ENCODE measurements at regions of chr11 and their contacts with region 1.

Region 1: GRCh38 chr11:64448599-64449556 is 89.9 kb downstream of the RPS6KA4 start:
- DNase-seq: peak; percentile 81 to 87
- ATAC-seq: peak; percentile 88 to 97
- H3K4me3 ChIP-seq: peak overlapping the region; percentile 37
- H3K27ac ChIP-seq: peak overlapping the region; percentile 17 to 72; a peak in 4 of 6 replicates
- H3K4me1 ChIP-seq: peaks cover 10% of the 10 kb centered on the region; the same call in 2 of the 3 replicates
- CTCF ChIP-seq: peak; percentile 84
- EP300 ChIP-seq: no peak
- POLR2A ChIP-seq: no peak
- RAD21 ChIP-seq: peak; percentile 74 to 76; a peak in 4 of 5 replicates

Region 2: DNA sequence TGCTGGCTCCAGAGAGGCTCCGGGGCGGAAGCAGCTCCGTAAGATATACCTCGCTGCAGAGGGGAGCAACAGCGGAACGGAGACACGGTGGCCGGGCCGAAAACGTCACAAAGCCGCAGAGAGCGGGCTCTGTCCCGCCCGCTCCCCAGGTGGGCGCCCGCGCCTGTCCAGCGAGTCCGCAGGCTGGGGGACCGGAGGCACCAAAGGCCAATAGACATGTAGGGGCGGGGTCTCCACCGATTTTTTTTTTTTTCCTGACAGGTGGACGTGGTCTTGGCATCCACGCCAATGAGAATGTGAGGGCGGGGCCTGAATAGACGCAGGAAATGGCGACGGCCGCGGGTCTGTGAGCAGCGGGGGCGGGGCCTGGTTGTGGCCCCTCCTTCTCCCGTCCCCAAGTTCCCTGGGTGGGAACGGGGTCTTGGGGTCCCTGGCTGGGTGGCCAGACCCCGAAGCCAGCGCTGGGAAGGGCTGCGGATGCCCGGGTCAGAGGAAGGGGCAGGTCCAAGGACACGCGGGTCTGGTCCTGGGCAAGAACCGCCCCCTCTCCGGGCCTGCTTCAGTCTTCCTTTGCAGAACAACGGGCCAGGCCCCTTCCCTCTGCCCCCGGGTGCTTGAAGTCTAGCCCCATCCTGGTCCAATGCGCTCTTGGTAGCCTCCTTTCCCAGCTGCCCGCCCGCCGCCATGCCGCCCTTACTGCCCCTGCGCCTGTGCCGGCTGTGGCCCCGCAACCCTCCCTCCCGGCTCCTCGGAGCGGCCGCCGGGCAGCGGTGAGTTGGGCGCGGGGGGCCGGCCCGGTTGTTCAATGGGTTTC is 218.5 kb before region 1 on chr11 and contains the start of gene DNAJC4:
- CTCF ChIA-PET with region 1: no interaction called
- POLR2A ChIA-PET with region 1: no interaction called
- DNase-seq: peak; percentile 77 to 91
- ATAC-seq: peak; percentile 35 to 64
- H3K4me3 ChIP-seq: peak within 1 kb of the TSS; percentile 94
- H3K27ac ChIP-seq: peak within 1 kb of the TSS; percentile 94 to 95
- H3K4me1 ChIP-seq: peaks cover 42% of the 10 kb centered on the region
- CTCF ChIP-seq: no peak
- EP300 ChIP-seq: no peak
- POLR2A ChIP-seq: peak; percentile 36
- RAD21 ChIP-seq: no peak
- polyA plus RNA-seq, gene DNAJC4: 8.9 and 9.8 TPM in 2 replicates

Region 3: GRCh38 chr11:64419818-64420485 is 28.9 kb before region 1 on chr11:
- CTCF ChIA-PET with region 1: interaction called, 23 read pairs
- POLR2A ChIA-PET with region 1: no interaction called
- DNase-seq: peak in 1 of 2 experiments; percentile 34
- ATAC-seq: no peak
- H3K4me3 ChIP-seq: no peak overlapping the region
- H3K27ac ChIP-seq: no peak overlapping the region
- H3K4me1 ChIP-seq: no peaks in the 10 kb centered on the region
- CTCF ChIP-seq: no peak
- EP300 ChIP-seq: no peak
- POLR2A ChIP-seq: no peak
- RAD21 ChIP-seq: no peak

Region 4: GRCh38 chr11:64436000-64436399 is 12.9 kb before region 1 on chr11:
- CTCF ChIA-PET with region 1: interaction called, 45 read pairs
- POLR2A ChIA-PET with region 1: no interaction called
- DNase-seq: no peak
- ATAC-seq: peak in 1 of 2 experiments; percentile 40; a peak in 2 of 6 replicates
- H3K4me3 ChIP-seq: no peak overlapping the region
- H3K27ac ChIP-seq: no peak overlapping the region
- H3K4me1 ChIP-seq: no peaks in the 10 kb centered on the region
- CTCF ChIP-seq: no peak
- EP300 ChIP-seq: no peak
- POLR2A ChIP-seq: no peak
- RAD21 ChIP-seq: no peak

Region 5: GRCh38 chr11:64466115-64466718 is 17.3 kb after region 1 on chr11:
- CTCF ChIA-PET with region 1: interaction called, 21 read pairs
- POLR2A ChIA-PET with region 1: interaction called, 3 read pairs
- DNase-seq: no peak
- ATAC-seq: no peak
- H3K4me3 ChIP-seq: no peak overlapping the region
- H3K27ac ChIP-seq: no peak overlapping the region
- H3K4me1 ChIP-seq: no peaks in the 10 kb centered on the region
- CTCF ChIP-seq: no peak
- EP300 ChIP-seq: no peak
- POLR2A ChIP-seq: no peak
- RAD21 ChIP-seq: no peak

Region 6: GRCh38 chr11:64489831-64490441 is 41.1 kb after region 1 on chr11:
- CTCF ChIA-PET with region 1: interaction called, 13 read pairs
- POLR2A ChIA-PET with region 1: no interaction called
- DNase-seq: peak; percentile 59 to 80
- ATAC-seq: peak; percentile 92 to 98
- H3K4me3 ChIP-seq: no peak overlapping the region
- H3K27ac ChIP-seq: no peak overlapping the region
- H3K4me1 ChIP-seq: no peaks in the 10 kb centered on the region
- CTCF ChIP-seq: peak; percentile 79
- EP300 ChIP-seq: no peak
- POLR2A ChIP-seq: no peak
- RAD21 ChIP-seq: peak; percentile 81 to 82

Region 7: GRCh38 chr11:64659417-64660144 is 210.7 kb after region 1 on chr11:
- CTCF ChIA-PET with region 1: interaction called, 255 read pairs
- POLR2A ChIA-PET with region 1: no interaction called
- DNase-seq: peak; percentile 64 to 73
- ATAC-seq: peak; percentile 42 to 56
- H3K4me3 ChIP-seq: no peak overlapping the region
- H3K27ac ChIP-seq: peak overlapping the region; percentile 60 to 67
- H3K4me1 ChIP-seq: peaks cover 27% of the 10 kb centered on the region
- CTCF ChIP-seq: no peak
- EP300 ChIP-seq: no peak
- POLR2A ChIP-seq: no peak
- RAD21 ChIP-seq: 0 out of 5 replicates have a peak, but pooled peaks of 1 of the 2 experiments have one; percentile 2

Region 8: DNA sequence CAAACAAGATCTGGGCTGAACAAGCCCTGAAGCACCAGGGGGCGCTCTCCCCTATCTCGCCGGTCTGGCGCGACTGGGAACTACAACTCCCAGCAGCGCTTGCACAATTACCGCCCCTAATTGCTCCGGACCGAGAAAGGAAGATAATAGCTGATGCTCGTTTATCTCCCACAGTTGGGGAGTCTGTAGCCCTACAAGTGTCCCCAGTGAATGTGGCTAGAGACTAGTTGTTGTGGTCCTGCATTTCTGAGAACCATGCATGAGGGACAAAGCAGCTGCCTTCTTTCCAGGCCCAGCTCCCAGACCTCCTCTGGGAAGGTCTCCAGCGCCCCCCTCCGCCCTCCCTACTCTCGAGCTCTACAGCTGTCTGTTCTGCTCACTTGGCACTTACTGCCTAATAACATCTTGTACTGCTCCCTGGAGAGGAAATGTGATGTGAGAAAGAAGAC is 239.7 kb after region 1 on chr11:
- CTCF ChIA-PET with region 1: interaction called, 23 read pairs
- POLR2A ChIA-PET with region 1: no interaction called
- DNase-seq: peak; percentile 89 to 90
- ATAC-seq: peak; percentile 90 to 98
- H3K4me3 ChIP-seq: peak overlapping the region; percentile 39
- H3K27ac ChIP-seq: peak overlapping the region; percentile 56 to 82
- H3K4me1 ChIP-seq: no peaks in the 10 kb centered on the region
- CTCF ChIP-seq: peak; percentile 99
- EP300 ChIP-seq: no peak
- POLR2A ChIP-seq: no peak
- RAD21 ChIP-seq: peak; percentile 54 to 87

Region 9: DNA sequence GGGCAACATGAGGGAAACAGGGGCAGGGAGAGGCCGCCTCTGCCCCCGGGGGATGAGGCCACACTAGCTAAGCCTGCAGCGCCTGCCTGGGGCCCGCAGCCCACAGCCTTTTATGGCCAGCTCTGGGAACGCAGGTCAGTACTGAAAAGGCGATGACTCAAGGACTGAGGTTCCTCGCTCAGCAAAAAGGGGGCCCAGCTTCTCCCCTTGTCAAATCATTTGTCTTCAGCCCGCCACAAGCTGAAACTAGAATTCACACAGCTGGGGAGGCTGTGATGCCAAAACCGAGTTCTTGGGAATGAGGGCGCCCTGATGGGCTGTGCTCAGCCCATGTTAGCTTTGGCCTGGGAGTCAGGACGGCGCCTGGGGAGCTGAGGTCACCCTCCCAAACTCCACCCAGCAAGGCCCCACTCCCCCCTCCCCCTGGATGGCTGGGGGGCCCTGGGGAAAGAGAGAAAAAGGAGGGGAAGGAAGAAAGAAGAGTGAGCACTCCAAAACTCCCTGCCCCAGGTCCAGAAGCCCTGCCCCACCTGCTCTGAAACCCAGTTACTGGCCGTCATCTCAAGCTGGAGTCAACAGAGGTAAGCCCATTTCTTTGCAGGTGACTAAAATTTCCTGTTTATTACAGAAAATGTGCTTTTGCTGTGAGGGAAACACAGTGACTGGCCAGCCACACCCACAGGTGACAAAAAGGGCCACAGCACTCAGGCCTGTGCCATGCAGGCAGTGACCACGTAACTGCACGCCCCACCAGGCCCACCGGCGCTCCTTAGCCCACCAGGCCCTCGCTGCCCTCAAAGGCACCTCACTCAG is 415.8 kb after region 1 on chr11:
- CTCF ChIA-PET with region 1: no interaction called
- POLR2A ChIA-PET with region 1: no interaction called
- DNase-seq: no peak
- ATAC-seq: no peak
- H3K4me3 ChIP-seq: no peak overlapping the region
- H3K27ac ChIP-seq: peak overlapping the region; percentile 22 to 73; a peak in 5 of 6 replicates
- H3K4me1 ChIP-seq: peaks cover 54% of the 10 kb centered on the region
- CTCF ChIP-seq: no peak
- EP300 ChIP-seq: no peak
- POLR2A ChIP-seq: no peak
- RAD21 ChIP-seq: no peak